GM12878 (cell line): ENCODE measurements at regions of chr11 and their contacts with region 1.

Region 1: GRCh38 chr11:67265633-67266423 is 445 bp upstream of the GRK2 start:
- DNase-seq: no peak
- ATAC-seq: peak; percentile 54
- H3K4me3 ChIP-seq: no peak overlapping the region
- H3K27ac ChIP-seq: 0 out of 2 replicates have a peak overlapping the region, but pooled peaks have one; percentile 33
- H3K4me1 ChIP-seq: peaks cover 36% of the 10 kb centered on the region
- H3K27me3 ChIP-seq: no peaks in the 10 kb centered on the region
- CTCF ChIP-seq: peak; percentile 63 to 84 (median 70); a peak in 5 of 6 replicates
- EP300 ChIP-seq: no peak
- POLR2A ChIP-seq: no peak
- RAD21 ChIP-seq: peak; percentile 80

Region 2: GRCh38 chr11:67239783-67240575 is 25.8 kb before region 1 on chr11:
- CTCF ChIA-PET with region 1: interaction called, 30 read pairs
- POLR2A ChIA-PET with region 1: interaction called, 6 read pairs
- RAD21 ChIA-PET with region 1: interaction called, 8 read pairs
- SMC1A ChIA-PET with region 1: interaction called, 13 read pairs
- in situ Hi-C with region 1: no loop called
- intact Hi-C with region 1: no loop called
- DNase-seq: peak; percentile 93
- ATAC-seq: peak; percentile 93
- H3K4me3 ChIP-seq: peak overlapping the region; percentile 89
- H3K27ac ChIP-seq: peak overlapping the region; percentile 90
- H3K4me1 ChIP-seq: peaks cover 17% of the 10 kb centered on the region
- H3K27me3 ChIP-seq: no peaks in the 10 kb centered on the region
- CTCF ChIP-seq: peak in 1 of 3 experiments; percentile 6; a peak in 1 of 6 replicates
- EP300 ChIP-seq: peak in 1 of 2 experiments; percentile 27; a peak in 1 of 4 replicates
- POLR2A ChIP-seq: peak; percentile 96
- RAD21 ChIP-seq: 0 out of 2 replicates have a peak, but pooled peaks have one; percentile 11

Region 3: GRCh38 chr11:67277231-67277961 is 11.6 kb after region 1 on chr11:
- CTCF ChIA-PET with region 1: interaction called, 20 read pairs
- POLR2A ChIA-PET with region 1: interaction called, 16 read pairs
- RAD21 ChIA-PET with region 1: interaction called, 10 read pairs
- SMC1A ChIA-PET with region 1: interaction called, 5 read pairs
- in situ Hi-C with region 1: no loop called
- intact Hi-C with region 1: loop called (anchors 1 kb)
- DNase-seq: peak; percentile 66
- ATAC-seq: peak; percentile 95
- H3K4me3 ChIP-seq: peak overlapping the region; percentile 57; the same call in 1 of the 2 replicates
- H3K27ac ChIP-seq: peak overlapping the region; percentile 99
- H3K4me1 ChIP-seq: peaks cover 47% of the 10 kb centered on the region
- H3K27me3 ChIP-seq: no peaks in the 10 kb centered on the region
- CTCF ChIP-seq: no peak
- EP300 ChIP-seq: peak; percentile 48 to 76; a peak in 3 of 4 replicates
- POLR2A ChIP-seq: peak; percentile 83
- RAD21 ChIP-seq: no peak

Region 4: DNA sequence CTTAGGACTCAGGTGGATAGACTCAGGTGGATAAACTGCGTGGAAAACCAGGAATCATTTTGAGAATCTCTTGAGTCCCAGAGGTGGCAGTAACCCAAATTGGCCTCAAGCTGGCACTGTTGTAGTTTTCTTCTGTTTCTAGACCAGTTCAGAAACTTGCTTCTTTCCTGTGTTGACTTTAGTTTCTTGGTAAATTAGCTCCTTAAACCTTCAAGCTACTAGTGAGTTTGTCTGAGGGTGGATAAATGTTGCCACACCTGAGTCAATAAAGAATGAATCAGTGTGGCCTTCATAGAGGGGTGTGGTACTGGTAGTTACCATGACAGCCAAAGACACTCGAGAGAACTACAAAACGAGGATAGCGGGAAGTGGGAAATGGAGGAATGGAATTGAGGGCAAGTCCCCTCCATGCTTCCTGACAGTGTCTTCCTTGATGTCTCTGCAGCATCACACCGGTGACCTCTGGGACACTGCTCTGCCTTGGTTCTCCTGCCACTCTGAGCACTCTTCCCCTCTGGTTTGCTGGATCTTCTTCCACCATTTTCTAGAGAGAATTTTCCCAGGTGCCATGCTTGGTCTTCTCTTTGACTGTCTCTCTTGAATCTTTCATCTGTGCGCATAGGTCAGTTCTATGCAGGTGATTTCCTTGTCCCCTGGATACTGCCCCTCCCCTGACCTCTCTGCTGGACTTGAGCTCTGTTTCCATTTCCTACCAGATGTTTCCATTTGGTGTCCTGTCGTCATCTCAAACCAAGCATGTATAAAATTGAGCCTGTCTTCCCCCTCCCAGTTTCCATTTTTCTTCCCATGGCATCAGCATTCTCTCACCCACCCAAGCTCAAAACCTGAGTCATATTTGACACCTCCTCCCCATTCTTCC is 80.3 kb after region 1 on chr11:
- CTCF ChIA-PET with region 1: interaction called, 29 read pairs
- POLR2A ChIA-PET with region 1: interaction called, 33 read pairs
- RAD21 ChIA-PET with region 1: interaction called, 7 read pairs
- SMC1A ChIA-PET with region 1: interaction called, 18 read pairs
- in situ Hi-C with region 1: no loop called
- intact Hi-C with region 1: no loop called
- DNase-seq: peak; percentile 24
- ATAC-seq: peak; percentile 72
- H3K4me3 ChIP-seq: no peak overlapping the region
- H3K27ac ChIP-seq: peak overlapping the region; percentile 35
- H3K4me1 ChIP-seq: peaks cover 52% of the 10 kb centered on the region
- H3K27me3 ChIP-seq: no peaks in the 10 kb centered on the region
- CTCF ChIP-seq: peak; percentile 88 to 97 (median 93); a peak in 5 of 6 replicates
- EP300 ChIP-seq: no peak
- POLR2A ChIP-seq: no peak
- RAD21 ChIP-seq: peak; percentile 69

Region 5: DNA sequence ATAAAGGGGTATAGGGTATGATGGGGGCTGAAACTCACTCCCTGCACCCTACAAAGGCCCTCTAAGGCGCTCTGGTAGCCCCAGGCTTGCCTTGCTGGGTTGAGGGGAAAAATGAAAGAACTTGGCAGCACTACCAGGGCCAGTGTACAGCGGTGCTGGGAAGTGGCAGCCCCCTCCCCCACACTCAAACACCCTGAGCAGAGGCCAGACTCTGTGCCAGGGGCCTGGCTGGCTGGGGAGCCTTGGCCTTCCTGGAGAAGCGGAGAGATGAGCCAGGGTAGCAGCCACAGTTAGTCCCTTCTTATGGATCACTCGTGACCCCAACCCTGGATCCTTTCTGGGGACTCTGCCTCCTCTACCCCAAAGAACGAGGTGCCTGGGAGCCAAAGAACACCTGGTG is 200.5 kb after region 1 on chr11:
- CTCF ChIA-PET with region 1: no interaction called
- POLR2A ChIA-PET with region 1: no interaction called
- RAD21 ChIA-PET with region 1: no interaction called
- SMC1A ChIA-PET with region 1: no interaction called
- in situ Hi-C with region 1: no loop called
- intact Hi-C with region 1: no loop called
- DNase-seq: no peak
- ATAC-seq: no peak
- H3K4me3 ChIP-seq: no peak overlapping the region
- H3K27ac ChIP-seq: no peak overlapping the region
- H3K4me1 ChIP-seq: peaks cover 37% of the 10 kb centered on the region
- H3K27me3 ChIP-seq: no peaks in the 10 kb centered on the region
- CTCF ChIP-seq: no peak
- EP300 ChIP-seq: no peak
- POLR2A ChIP-seq: no peak
- RAD21 ChIP-seq: no peak

Region 6: GRCh38 chr11:67482825-67483798 is 217.3 kb after region 1 on chr11 and contains the start of gene AIP:
- CTCF ChIA-PET with region 1: interaction called, 3 read pairs
- POLR2A ChIA-PET with region 1: interaction called, 3 read pairs
- RAD21 ChIA-PET with region 1: no interaction called
- SMC1A ChIA-PET with region 1: interaction called, 3 read pairs
- in situ Hi-C with region 1: no loop called
- intact Hi-C with region 1: loop called (anchors 10 kb)
- DNase-seq: peak; percentile 97
- ATAC-seq: peak; percentile 77
- H3K4me3 ChIP-seq: peak within 1 kb of the TSS; percentile 67
- H3K27ac ChIP-seq: peak within 1 kb of the TSS; percentile 70
- H3K4me1 ChIP-seq: peaks cover 43% of the 10 kb centered on the region
- H3K27me3 ChIP-seq: no peaks in the 10 kb centered on the region
- CTCF ChIP-seq: peak in 1 of 3 experiments; percentile 19; a peak in 1 of 6 replicates
- EP300 ChIP-seq: no peak
- POLR2A ChIP-seq: peak; percentile 78
- RAD21 ChIP-seq: no peak
- polyA plus RNA-seq, gene AIP: 12.6 to 29.7 TPM